Naive thymus-derived CD4-positive, alpha-beta T cell (primary cell): ENCODE measurements at regions of chr4 and their contacts with region 1.

Region 1: GRCh38 chr4:140243278-140243753 is 89.3 kb upstream of the MAML3 start:
- DNase-seq: peak in 4 of 9 donors; percentile 21 to 35 (median 29)
- ATAC-seq: peak; percentile 71
- H3K4me3 ChIP-seq: no peak overlapping the region
- H3K4me3 Mint-ChIP-seq: peak overlapping the region; percentile 24 to 73 (median 68)
- H3K27ac ChIP-seq: peak overlapping the region; percentile 27
- H3K27ac Mint-ChIP-seq: peak overlapping the region; percentile 57 to 93 (median 80)
- H3K4me1 ChIP-seq: peaks cover 0 to 17% of the 10 kb centered on the region in 2 donors
- H3K4me1 Mint-ChIP-seq: peaks cover 15 to 31% (median 29%) of the 10 kb centered on the region in 7 donors
- H3K27me3 ChIP-seq: no peaks in the 10 kb centered on the region
- H3K27me3 Mint-ChIP-seq: peaks cover 0 to 19% (median 0%) of the 10 kb centered on the region in 5 donors

Region 2: DNA sequence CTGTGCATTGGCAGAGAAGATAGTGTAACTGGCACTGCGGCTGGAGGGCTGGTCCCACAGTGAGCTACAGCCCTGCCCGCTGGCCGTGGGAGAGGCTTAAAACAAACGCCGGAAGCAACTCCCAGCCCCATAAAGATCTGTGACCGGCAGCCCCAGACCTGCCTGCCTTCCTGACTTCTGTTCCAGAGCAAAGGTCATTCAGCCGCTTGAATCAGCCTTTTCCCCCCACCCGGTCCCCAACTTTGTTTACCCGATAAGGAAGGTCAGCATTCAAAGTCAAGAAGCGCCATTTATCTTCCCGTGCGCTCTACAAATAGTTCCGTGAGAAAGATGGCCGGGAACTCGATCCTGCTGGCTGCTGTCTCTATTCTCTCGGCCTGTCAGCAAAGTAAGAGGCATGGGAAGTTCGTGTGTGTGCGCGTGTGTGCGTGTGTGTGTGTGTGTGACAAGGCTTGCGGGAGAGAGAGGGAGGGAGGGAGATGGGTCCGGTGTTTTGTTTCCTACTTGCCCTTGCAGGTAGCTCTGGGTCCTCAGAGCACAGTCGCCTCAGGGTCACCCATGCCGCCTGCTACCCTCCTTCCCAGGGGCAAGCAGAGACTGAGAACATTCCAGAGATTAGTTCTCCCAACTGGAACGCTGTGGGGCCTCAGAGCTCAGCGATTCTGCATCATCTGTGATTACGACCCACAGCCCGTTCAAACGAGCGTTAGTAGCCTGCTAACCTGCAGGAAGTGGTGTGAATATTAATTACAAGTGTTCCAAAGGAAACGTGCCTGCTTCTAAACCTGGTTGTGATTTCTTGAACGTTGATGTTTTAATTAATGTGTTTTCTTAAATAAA is 577.4 kb before region 1 on chr4 and contains the start of gene MGST2:
- CTCF ChIA-PET with region 1: no interaction called
- POLR2A ChIA-PET with region 1: no interaction called
- intact Hi-C with region 1: loop called in 1 of 2 experiments (anchors 5 kb)
- DNase-seq: peak in 5 of 9 donors; percentile 17 to 51 (median 27)
- ATAC-seq: peak; percentile 61
- H3K4me3 ChIP-seq: peak within 1 kb of the TSS; percentile 64
- H3K4me3 Mint-ChIP-seq: peak within 1 kb of the TSS; percentile 90 to 99 (median 94)
- H3K27ac ChIP-seq: peak within 1 kb of the TSS; percentile 42
- H3K27ac Mint-ChIP-seq: peak within 1 kb of the TSS; percentile 49 to 95 (median 88)
- H3K4me1 ChIP-seq: peaks cover 0 to 9% of the 10 kb centered on the region in 2 donors
- H3K4me1 Mint-ChIP-seq: peaks cover 15 to 44% (median 19%) of the 10 kb centered on the region in 7 donors
- H3K27me3 ChIP-seq: no peaks in the 10 kb centered on the region
- H3K27me3 Mint-ChIP-seq: no peaks in the 10 kb centered on the region
- total RNA-seq, gene MGST2: 1.4 to 37.3 (median 1.9) TPM

Region 3: DNA sequence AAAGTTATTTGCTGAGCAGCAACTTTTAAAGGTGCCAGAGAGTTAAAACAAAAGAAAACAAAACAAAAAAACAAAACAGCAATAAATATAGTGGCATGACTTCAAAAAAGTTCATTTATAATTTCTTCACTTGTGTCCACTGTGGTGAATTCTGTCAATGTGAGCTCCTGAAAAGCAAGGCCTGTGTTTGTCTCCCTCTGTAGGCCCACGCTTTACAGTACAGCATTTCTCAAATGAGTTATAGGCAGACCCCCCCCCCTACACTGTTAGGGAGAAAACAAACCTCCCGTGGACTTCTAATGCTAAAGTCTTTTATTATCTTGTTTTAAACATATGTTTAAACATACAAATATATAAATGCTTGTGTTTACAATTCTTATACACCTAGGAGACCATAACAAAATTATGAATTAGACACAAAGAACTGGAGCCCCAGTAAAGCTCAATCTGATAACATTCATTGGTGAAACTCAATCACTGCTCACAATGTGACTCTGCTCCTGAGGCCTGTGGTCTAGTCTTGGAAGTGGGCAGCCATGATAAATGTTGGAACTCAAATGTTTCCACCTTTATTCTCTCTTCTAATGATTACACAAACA is 83.2 kb after region 1 on chr4:
- CTCF ChIA-PET with region 1: no interaction called
- POLR2A ChIA-PET with region 1: no interaction called
- intact Hi-C with region 1: no loop called
- DNase-seq: no peak
- ATAC-seq: no peak
- H3K4me3 ChIP-seq: no peak overlapping the region
- H3K4me3 Mint-ChIP-seq: no peak overlapping the region
- H3K27ac ChIP-seq: no peak overlapping the region
- H3K27ac Mint-ChIP-seq: no peak overlapping the region
- H3K4me1 ChIP-seq: no peaks in the 10 kb centered on the region
- H3K4me1 Mint-ChIP-seq: peaks cover 0 to 11% (median 3%) of the 10 kb centered on the region in 7 donors
- H3K27me3 ChIP-seq: no peaks in the 10 kb centered on the region
- H3K27me3 Mint-ChIP-seq: peaks cover 0 to 28% (median 4%) of the 10 kb centered on the region in 5 donors